A549 (cell line): ENCODE measurements at regions of chr10 and their contacts with region 1.

Region 1: DNA sequence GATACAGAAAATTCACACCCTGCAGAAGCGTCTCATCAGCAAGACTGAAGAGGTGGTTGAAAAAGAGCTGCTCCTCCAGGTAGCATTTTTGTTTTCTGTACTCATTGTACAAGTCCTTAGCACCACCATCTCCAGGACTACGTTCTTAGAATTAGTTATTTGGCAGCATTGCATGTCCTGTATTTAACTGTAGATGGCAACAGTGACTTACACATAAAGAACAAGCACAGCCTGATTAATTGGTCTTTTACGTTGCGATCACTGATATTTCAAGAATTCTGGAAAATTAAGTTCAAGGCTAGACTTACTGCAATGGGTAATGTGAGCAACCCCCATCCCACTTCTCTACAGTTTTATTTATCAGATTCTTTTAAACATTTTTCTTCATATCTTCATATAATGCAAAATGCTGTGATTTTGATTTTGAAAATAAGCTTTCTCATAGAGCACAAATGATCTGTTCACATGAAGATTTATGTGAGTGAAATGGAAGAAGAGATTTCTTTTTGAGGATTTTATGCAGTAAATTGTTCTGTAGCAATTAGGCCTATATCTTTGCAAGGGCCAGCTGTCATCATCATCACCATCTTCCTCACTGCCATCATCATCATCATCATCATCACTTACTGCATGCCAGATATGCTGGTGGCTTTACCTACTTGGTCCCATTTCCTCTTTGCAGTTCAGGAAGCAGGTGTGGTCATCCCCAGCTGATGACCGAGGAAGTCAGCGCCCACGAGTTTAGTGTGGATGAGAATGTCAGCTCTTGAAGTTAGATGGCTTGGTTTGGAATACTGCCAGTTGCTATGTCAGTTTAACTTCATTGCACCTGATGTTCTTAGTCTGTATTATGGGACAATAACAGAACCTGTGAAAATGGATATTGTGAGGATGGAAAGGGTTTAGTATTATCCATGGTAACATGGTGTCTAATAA is 53.4 kb downstream of the CFAP58 start:
- DNase-seq: peak; percentile 11 to 35
- ATAC-seq: peak; percentile 70 to 81; a peak in 4 of 6 replicates
- H3K4me3 ChIP-seq: no peak overlapping the region
- H3K27ac ChIP-seq: no peak overlapping the region
- H3K4me1 ChIP-seq: no peaks in the 10 kb centered on the region
- CTCF ChIP-seq: peak; percentile 53; the same call in 2 of the 3 replicates
- EP300 ChIP-seq: no peak
- POLR2A ChIP-seq: no peak
- RAD21 ChIP-seq: peak; percentile 64 to 71

Region 2: DNA sequence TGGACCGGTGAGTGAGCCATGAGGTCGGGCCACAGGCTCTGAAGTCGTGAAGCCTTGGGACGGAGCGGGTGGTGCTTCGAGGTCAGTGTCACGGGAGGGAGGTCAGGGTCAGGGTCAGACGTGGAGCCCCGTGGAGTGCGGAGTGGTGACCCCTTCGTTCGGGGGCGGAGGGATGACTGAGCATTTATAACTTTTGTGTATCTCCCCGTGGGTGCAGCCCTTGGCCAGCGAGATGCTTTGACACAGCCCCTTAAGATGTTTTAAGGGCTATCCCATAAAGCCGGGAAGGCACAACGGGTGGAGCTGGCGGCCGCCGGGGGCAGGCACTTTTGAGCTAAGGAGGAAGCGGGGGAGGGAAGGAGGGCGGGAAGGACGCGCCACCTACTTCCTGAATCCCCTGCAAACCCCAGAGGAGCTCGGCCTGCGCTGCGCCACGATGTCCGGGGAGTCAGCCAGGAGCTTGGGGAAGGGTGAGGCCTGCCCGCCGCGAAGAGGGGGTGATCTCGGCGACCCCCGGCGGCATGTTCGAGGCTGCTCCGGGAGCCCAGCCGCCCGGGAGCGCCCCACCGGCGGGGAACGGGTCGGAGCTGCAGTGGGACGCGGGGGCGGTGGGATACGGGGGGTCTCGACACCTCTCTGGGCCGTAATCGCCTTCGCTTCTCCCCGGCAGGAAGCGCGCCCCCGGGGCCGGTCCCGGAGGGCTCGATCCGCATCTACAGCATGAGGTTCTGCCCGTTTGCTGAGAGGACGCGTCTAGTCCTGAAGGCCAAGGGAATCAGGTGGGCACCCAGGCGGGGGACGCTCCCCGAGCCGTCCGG is 152.3 kb before region 1 on chr10 and contains the start of gene GSTO1:
- CTCF ChIA-PET with region 1: no interaction called
- POLR2A ChIA-PET with region 1: no interaction called
- DNase-seq: peak; percentile 77 to 79
- ATAC-seq: peak; percentile 89 to 95
- H3K4me3 ChIP-seq: peak within 1 kb of the TSS; percentile 99
- H3K27ac ChIP-seq: peak within 1 kb of the TSS; percentile 98 to 99
- H3K4me1 ChIP-seq: peaks cover 25% of the 10 kb centered on the region
- CTCF ChIP-seq: no peak
- EP300 ChIP-seq: no peak
- POLR2A ChIP-seq: peak; percentile 90
- RAD21 ChIP-seq: 0 out of 5 replicates have a peak, but pooled peaks of 1 of the 2 experiments have one; percentile 9
- polyA plus RNA-seq, gene GSTO1: 172 and 204 TPM in 2 replicates

Region 3: GRCh38 chr10:104391150-104391968 is 15.6 kb before region 1 on chr10:
- CTCF ChIA-PET with region 1: interaction called, 12 read pairs
- POLR2A ChIA-PET with region 1: no interaction called
- DNase-seq: peak in 1 of 2 experiments; percentile 46
- ATAC-seq: no peak
- H3K4me3 ChIP-seq: no peak overlapping the region
- H3K27ac ChIP-seq: no peak overlapping the region
- H3K4me1 ChIP-seq: peaks cover 7% of the 10 kb centered on the region; the same call in 1 of the 3 replicates
- CTCF ChIP-seq: no peak
- EP300 ChIP-seq: no peak
- POLR2A ChIP-seq: no peak
- RAD21 ChIP-seq: no peak

Region 4: GRCh38 chr10:104396581-104396980 is 10.4 kb before region 1 on chr10:
- CTCF ChIA-PET with region 1: interaction called, 12 read pairs
- POLR2A ChIA-PET with region 1: no interaction called
- DNase-seq: no peak
- ATAC-seq: no peak
- H3K4me3 ChIP-seq: no peak overlapping the region
- H3K27ac ChIP-seq: no peak overlapping the region
- H3K4me1 ChIP-seq: peaks cover 2% of the 10 kb centered on the region; the same call in 1 of the 3 replicates
- CTCF ChIP-seq: no peak
- EP300 ChIP-seq: no peak
- POLR2A ChIP-seq: no peak
- RAD21 ChIP-seq: no peak

Region 5: DNA sequence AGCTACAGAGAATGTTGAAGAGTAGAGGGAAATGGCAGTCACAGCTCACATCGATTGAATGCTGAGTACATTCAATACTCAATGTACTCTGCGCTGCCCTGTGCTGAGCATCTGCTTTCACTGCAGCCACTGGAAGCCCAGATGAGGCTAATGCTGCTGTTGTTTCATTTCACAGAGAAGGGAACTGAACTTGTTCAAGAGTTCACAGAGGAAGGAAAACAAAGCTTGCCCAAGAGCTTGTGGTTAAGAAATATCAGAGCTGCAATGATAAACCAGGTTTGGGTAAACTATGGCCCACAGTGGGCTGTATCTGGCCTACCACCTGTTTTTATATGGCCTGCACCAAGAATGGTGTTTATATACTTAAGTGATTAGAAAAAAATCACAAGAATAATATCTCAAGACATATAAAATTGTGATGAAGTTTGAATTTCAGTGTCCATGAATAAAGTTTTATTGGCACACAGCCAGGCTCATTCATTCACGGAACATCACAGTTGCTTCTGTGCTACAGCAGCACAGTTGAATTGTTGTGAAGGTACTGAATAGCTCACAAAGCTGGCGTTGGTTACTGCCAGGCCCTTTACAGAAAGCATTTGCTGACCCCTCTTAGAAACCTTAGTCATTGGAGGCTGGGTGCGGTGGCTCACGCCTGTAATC is 10.8 kb after region 1 on chr10:
- CTCF ChIA-PET with region 1: interaction called, 14 read pairs
- POLR2A ChIA-PET with region 1: no interaction called
- DNase-seq: no peak
- ATAC-seq: no peak
- H3K4me3 ChIP-seq: no peak overlapping the region
- H3K27ac ChIP-seq: no peak overlapping the region
- H3K4me1 ChIP-seq: no peaks in the 10 kb centered on the region
- CTCF ChIP-seq: no peak
- EP300 ChIP-seq: no peak
- POLR2A ChIP-seq: no peak
- RAD21 ChIP-seq: no peak

Region 6: GRCh38 chr10:104527013-104527412 is 120.0 kb after region 1 on chr10:
- CTCF ChIA-PET with region 1: no interaction called
- POLR2A ChIA-PET with region 1: no interaction called
- DNase-seq: no peak
- ATAC-seq: no peak
- H3K4me3 ChIP-seq: no peak overlapping the region
- H3K27ac ChIP-seq: no peak overlapping the region
- H3K4me1 ChIP-seq: no peaks in the 10 kb centered on the region
- CTCF ChIP-seq: no peak
- EP300 ChIP-seq: no peak
- POLR2A ChIP-seq: no peak
- RAD21 ChIP-seq: no peak

Region 7: DNA sequence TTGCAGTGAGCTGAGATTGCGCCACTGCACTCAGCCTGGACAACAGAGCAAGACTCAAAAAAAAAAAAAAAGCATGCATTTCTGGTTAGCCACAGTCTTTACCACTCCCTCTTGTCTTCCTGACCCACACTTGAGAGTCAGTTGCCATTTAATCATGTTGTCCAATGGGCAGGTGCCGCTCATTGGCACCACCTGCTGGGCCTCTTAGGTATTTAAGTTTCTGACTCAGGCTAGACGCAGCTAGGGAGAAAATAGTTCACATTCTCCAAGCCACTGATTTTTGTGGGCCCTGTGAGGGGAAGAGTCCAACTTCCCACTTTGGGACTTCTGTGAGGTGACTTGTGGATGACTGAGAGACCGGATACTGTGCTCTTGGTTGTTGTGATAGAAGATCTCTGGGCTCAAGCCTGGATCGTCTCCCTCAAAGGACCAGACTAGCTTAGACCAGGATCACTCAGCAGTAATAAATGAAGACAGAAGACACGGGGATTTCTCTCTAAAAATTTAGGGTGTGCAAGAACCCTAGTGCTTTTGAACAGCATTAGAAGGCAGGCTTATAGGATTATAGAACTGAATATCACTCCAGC is 207.4 kb after region 1 on chr10:
- CTCF ChIA-PET with region 1: interaction called, 13 read pairs
- POLR2A ChIA-PET with region 1: no interaction called
- DNase-seq: peak; percentile 28 to 38
- ATAC-seq: peak; percentile 64 to 87; a peak in 5 of 6 replicates
- H3K4me3 ChIP-seq: no peak overlapping the region
- H3K27ac ChIP-seq: no peak overlapping the region
- H3K4me1 ChIP-seq: no peaks in the 10 kb centered on the region
- CTCF ChIP-seq: peak; percentile 45; the same call in 2 of the 3 replicates
- EP300 ChIP-seq: no peak
- POLR2A ChIP-seq: no peak
- RAD21 ChIP-seq: peak; percentile 23 to 53; a peak in 3 of 5 replicates